Activated T-helper 1 cell treated with anti-CD3 and anti-CD28 coated beads, Interleukin-12 subunit alpha, Interleukin-12 subunit beta, Interleukin-2, Interleukin-4 antibody, amounts not matched to agents 30 ng/mL and 10 ng/mL and 1 ng/mL, durations not matched to agents 14 hours and 24 hours and 36 hours (primary cell): ENCODE measurements at regions of chr5 and their contacts with region 1.

Region 1: GRCh38 chr5:61331407-61332357 is at the start of gene ZSWIM6:
- DNase-seq: peak; percentile 96
- H3K4me3 Mint-ChIP-seq: peak within 1 kb of the TSS; percentile 96
- H3K27ac Mint-ChIP-seq: peak within 1 kb of the TSS; percentile 99
- H3K4me1 Mint-ChIP-seq: peaks cover 52% of the 10 kb centered on the region
- H3K27me3 Mint-ChIP-seq: peaks cover 45% of the 10 kb centered on the region
- total RNA-seq, gene ZSWIM6: 9.6 TPM in 2 replicates

Region 2: DNA sequence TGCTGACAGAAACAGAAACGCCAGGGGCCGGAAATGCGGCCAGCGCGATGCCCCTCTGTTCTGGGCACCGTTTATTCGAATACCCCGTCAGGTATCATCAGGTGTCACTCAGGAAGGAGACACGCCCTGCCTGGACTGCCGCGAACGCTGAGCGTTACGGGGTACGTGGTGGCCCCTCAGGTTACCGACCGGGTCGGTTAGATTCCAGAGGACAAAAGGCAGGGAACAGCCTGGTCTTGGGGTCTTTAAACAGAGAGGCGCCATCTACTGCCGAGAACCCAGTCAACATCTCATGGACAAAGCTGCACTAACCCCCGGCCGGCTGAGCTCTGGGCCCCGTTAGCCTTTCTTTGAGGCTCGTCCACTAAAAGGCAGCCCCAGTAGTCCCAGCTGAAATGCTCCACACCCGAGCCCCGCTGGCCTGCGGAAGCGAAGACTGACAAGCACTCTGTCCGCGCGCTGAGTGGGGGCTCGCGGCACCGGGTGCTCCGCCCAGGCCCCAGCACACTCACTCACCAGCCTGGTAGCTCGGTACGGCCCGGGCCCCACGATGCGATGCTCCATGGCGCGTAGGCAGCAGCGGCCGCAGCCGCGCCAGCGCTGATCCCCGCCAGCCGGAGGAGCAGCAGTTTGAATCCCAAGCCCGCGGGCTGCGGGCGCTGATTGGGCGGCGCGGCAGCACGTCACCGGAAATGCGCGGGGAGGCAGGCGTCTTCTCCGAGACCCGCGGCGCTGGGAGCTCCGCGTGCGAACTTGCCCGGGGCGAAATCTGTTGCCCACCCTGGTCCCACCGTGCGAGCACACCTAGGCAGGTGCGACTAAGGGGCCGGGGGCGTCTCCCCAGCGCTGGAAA is 631.9 kb before region 1 on chr5 and contains the start of gene DEPDC1B:
- intact Hi-C with region 1: loop called (anchors 1 kb)
- DNase-seq: peak; percentile 87
- H3K4me3 Mint-ChIP-seq: peak within 1 kb of the TSS; percentile 96
- H3K27ac Mint-ChIP-seq: peak within 1 kb of the TSS; percentile 93
- H3K4me1 Mint-ChIP-seq: peaks cover 37% of the 10 kb centered on the region
- H3K27me3 Mint-ChIP-seq: peaks cover 18% of the 10 kb centered on the region
- total RNA-seq, gene DEPDC1B: 19.6 and 21.2 TPM in 2 replicates

Region 3: DNA sequence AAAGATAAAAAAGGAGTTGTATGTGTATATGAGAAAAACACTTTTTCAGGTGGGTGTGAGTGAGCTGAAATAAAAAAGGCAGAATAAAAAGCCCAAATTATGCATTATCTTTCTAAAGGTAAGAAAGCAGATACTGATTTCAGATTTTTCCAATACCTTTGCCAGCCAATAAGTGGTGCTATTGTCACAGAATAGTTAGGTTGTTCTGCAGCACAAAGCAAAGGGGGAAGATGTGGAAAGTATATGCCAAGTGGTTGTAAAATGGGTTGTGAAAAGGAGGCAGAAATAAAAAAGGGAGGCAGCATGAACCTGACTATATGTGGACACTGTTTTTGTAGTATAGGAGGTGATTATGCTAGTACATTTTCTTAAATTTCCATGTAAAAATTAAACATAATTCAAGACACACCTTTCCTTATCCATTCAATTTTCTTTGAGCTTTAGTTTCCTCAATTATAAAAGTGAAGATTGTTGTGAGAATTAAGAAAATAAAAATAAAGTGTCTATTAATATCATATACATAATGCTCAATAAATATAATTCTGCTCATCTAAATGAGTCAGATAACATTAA is 276.2 kb before region 1 on chr5:
- intact Hi-C with region 1: loop called (anchors 2 kb)
- DNase-seq: no peak
- H3K4me3 Mint-ChIP-seq: no peak overlapping the region
- H3K27ac Mint-ChIP-seq: no peak overlapping the region
- H3K4me1 Mint-ChIP-seq: no peaks in the 10 kb centered on the region
- H3K27me3 Mint-ChIP-seq: no peaks in the 10 kb centered on the region

Region 4: GRCh38 chr5:61202213-61202612 is 129.5 kb before region 1 on chr5:
- intact Hi-C with region 1: loop called (anchors 1 kb)
- DNase-seq: no peak
- H3K4me3 Mint-ChIP-seq: no peak overlapping the region
- H3K27ac Mint-ChIP-seq: peak overlapping the region; percentile 7
- H3K4me1 Mint-ChIP-seq: peaks cover 11% of the 10 kb centered on the region
- H3K27me3 Mint-ChIP-seq: peaks cover 5% of the 10 kb centered on the region

Region 5: DNA sequence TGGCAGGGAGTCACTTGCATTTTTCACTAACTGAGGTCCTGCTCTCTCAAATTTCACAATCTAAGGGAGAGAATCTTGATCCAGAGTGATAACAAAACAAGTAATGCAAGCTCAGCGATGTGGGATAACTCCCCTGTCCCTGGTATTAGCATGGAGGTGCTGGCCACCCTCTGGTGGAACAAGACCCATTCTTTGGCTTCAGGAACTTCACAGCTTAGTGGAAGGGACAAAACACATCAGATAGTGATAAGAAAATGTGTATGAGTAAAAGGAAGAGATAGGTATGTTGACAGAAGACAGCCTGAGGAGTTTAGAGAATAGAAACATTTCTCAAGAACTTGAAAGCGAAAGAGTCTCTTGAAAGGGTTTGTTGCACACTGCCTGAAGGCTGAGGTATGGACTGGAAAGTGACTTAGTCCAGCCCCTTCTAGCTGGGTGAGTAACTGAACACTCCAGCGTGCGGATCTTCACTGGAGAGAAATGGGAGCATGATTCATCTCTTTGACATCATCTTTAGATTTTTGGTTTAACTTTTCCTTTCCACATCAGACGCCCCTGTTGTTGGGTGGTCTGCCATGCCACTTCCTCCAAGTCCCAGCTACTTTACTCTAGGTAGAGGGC is 25.1 kb before region 1 on chr5:
- intact Hi-C with region 1: loop called (anchors 1 kb)
- DNase-seq: no peak
- H3K4me3 Mint-ChIP-seq: peak overlapping the region; percentile 65
- H3K27ac Mint-ChIP-seq: peak overlapping the region; percentile 81
- H3K4me1 Mint-ChIP-seq: peaks cover 28% of the 10 kb centered on the region
- H3K27me3 Mint-ChIP-seq: peaks cover 5% of the 10 kb centered on the region

Region 6: GRCh38 chr5:61534481-61535267 is 203.0 kb after region 1 on chr5:
- intact Hi-C with region 1: loop called (anchors 1 kb)
- DNase-seq: no peak
- H3K4me3 Mint-ChIP-seq: peak overlapping the region; percentile 25
- H3K27ac Mint-ChIP-seq: peak overlapping the region; percentile 69
- H3K4me1 Mint-ChIP-seq: peaks cover 16% of the 10 kb centered on the region
- H3K27me3 Mint-ChIP-seq: no peaks in the 10 kb centered on the region

Region 7: DNA sequence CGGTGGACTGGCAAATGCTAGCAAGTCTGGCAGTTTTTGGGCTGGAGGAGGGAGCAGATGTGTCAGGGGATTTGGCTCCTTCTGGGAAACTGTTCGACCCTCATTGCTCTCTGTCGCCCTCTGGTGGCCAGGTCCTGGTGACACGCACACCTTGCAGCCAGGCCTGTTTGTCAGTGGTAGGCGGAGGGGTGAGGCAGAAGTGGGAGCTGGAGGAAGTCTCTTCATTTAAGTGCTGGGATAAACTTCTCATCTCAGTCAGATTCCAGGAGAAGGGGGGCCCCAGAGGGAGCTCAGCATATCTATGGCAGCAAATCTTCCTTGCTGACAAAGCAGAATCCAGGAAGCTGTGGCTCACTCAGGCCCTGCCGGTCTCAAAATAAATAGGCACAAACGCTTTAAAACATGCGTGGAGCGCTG is 326.9 kb after region 1 on chr5:
- intact Hi-C with region 1: loop called (anchors 5 kb)
- DNase-seq: peak; percentile 51
- H3K4me3 Mint-ChIP-seq: no peak overlapping the region
- H3K27ac Mint-ChIP-seq: no peak overlapping the region
- H3K4me1 Mint-ChIP-seq: no peaks in the 10 kb centered on the region
- H3K27me3 Mint-ChIP-seq: peaks cover 7% of the 10 kb centered on the region